ENCODE measurements at regions of chr22 and their contacts with region 1.

Region 1: DNA sequence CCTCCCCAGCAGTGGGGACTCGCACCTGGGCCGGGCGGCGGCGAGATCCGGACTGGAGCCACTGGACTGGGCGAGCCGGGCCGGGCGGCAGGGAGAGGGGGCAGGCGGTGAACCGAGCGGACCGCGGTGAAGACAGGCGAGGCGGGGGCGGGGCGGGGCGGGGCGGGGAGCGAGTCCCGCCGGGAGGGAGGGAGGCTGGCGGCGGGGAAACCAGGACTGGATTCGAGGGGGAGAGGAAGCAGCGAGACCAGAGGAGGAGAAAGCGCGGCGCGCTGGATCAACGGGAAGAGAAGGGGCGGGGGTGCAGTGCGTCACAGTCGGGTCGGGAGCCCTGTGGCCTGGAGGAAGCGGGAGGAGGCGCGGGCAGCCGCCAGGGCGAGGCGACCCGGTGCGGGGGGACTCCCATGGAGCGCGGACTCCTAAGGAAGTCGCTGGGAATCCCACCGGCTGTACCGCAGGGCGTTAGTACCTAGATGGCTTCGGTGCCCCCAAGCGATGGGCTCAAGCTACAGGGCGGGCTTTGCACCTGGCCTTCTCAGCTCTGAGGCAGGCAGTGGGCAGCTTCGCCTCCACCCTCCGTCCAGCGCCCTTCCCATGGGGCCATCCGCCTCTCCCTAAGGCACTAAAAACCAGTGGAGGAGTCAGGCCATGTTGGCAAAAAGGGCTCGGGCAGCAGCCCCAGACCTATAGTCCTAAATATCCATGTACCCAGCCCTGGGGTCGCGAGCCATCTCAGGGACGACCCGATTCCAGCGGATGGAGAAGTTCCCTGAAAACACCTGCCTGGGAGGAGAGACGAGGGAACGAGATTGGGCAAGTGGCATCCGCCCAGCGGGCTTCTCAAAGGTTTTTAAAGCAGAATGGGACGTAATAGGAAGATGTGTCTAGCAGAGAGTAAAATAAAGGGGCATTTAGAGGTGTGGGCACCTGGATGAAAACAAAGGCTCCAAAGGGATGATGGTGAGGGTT is at the start of gene TMEM121B:
- DNase-seq: no peak
- H3K4me3 ChIP-seq: no peak within 1 kb of the TSS
- H3K4me3 Mint-ChIP-seq: peak within 1 kb of the TSS; percentile 51 to 74 (median 62)
- H3K27ac ChIP-seq: no peak within 1 kb of the TSS
- H3K27ac Mint-ChIP-seq: peak within 1 kb of the TSS in 1 of 7 donors; percentile 23
- H3K4me1 ChIP-seq: peaks cover 44% of the 10 kb centered on the region
- H3K4me1 Mint-ChIP-seq: peaks cover 25 to 39% (median 31%) of the 10 kb centered on the region in 4 donors
- H3K27me3 ChIP-seq: peaks cover 14% of the 10 kb centered on the region
- H3K27me3 Mint-ChIP-seq: peaks cover 8 to 15% of the 10 kb centered on the region in 2 donors
- total RNA-seq, gene TMEM121B: 0.12 TPM in 1 of 2 experiments, not detected in the other

Region 2: DNA sequence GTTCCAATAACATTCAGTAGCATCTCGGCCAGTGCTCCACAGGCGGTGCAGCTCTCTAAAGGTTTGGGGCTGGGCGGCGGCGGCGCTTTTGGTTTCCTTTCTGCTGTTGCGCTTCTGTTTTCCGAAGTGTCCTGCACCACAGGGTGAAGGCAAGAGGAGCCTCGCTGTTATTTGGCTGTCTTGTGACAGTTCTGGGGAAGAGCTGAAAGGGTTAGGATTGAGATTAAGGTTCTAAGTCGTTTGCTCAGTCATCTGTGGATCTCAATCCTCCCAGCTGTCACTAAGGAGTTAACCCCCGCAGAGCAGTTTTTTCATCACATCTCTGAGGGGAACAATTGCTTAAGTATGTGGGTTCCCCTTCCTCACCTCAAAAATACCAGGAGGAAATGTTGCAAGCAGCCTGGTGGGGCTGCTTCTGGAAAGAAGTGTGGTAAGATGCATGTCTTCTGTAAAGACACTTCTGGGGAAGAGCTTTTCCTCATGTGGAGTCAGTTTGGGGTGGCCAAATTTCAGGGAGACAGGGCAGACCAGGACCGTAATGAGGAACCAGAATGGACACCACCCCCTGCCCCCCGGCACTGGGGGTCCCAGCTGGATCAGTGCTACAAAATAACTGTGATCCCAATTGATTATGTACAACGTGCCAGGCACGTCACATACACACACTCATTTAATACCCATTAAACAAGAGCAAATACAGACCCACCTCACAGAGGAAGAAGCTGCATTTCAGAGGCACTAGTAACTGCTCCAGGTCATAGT is 14.5 kb before region 1 on chr22:
- CTCF ChIA-PET with region 1: interaction called, 4 read pairs
- POLR2A ChIA-PET with region 1: interaction called, 17 read pairs
- intact Hi-C with region 1: no loop called
- DNase-seq: peak in 1 of 5 donors; percentile 17
- H3K4me3 ChIP-seq: no peak overlapping the region
- H3K4me3 Mint-ChIP-seq: peak overlapping the region; percentile 64 to 87 (median 72)
- H3K27ac ChIP-seq: no peak overlapping the region
- H3K27ac Mint-ChIP-seq: peak overlapping the region; percentile 73 to 85 (median 84)
- H3K4me1 ChIP-seq: peaks cover 28% of the 10 kb centered on the region
- H3K4me1 Mint-ChIP-seq: peaks cover 23 to 61% (median 43%) of the 10 kb centered on the region in 4 donors
- H3K27me3 ChIP-seq: no peaks in the 10 kb centered on the region
- H3K27me3 Mint-ChIP-seq: no peaks in the 10 kb centered on the region

Region 3: DNA sequence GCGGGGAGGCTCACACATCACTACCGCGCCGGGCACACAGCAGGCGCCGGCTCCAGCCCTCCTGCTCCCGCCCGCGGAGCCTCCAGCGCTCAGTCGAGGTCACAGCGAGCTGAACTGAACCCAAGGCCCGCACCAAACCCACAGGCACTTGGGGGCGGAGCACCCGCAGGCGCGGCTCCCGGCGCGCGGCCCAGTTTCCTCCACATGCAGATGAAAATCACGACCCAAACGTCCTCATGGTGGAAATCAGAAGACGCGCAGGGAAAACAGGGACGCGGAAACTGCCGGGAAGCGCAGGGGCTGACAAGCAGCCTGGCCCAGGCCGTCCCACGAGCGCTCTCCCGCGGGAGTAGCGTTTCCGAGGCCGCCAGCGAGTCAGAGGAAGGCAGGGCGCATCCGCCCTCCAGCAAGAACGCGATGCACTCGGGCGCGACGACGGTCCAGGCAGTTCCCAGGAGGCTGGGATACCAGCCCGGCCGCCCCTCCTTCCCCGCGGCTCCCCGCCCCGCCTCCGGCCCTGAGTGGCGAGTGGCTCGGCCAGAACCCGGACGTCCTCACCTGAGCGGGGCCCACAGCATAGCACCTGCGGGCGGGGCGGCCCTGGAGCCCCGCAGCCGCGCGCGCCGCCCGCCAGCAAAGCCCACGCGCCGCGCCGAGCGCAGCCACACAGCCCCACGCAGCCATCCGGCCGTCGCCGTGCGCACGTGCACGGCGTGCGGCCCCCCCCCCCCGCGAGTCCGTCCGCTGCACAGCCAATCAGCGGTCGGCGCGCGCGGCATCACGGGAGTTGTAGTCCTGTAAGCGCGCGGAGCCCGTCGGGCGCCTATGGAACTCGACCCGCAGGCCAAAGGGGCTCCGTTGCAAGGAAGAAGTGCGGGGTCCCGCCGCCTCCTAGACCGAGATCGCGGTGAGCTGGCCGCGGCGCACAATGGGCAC is 37.3 kb after region 1 on chr22 and contains the start of gene HDHD5:
- CTCF ChIA-PET with region 1: interaction called, 4 read pairs
- POLR2A ChIA-PET with region 1: no interaction called
- intact Hi-C with region 1: loop called (anchors 1 kb)
- DNase-seq: peak; percentile 81 to 87 (median 85)
- H3K4me3 ChIP-seq: peak within 1 kb of the TSS; percentile 52 to 81
- H3K4me3 Mint-ChIP-seq: peak within 1 kb of the TSS; percentile 84 to 90 (median 88)
- H3K27ac ChIP-seq: peak within 1 kb of the TSS; percentile 46
- H3K27ac Mint-ChIP-seq: peak within 1 kb of the TSS; percentile 77 to 88 (median 85)
- H3K4me1 ChIP-seq: peaks cover 36% of the 10 kb centered on the region
- H3K4me1 Mint-ChIP-seq: peaks cover 17 to 48% (median 24%) of the 10 kb centered on the region in 4 donors
- H3K27me3 ChIP-seq: no peaks in the 10 kb centered on the region
- H3K27me3 Mint-ChIP-seq: no peaks in the 10 kb centered on the region
- total RNA-seq, gene HDHD5: 23.1 to 23.3 TPM

Region 4: GRCh38 chr22:17734187-17734586 is 612.7 kb after region 1 on chr22:
- CTCF ChIA-PET with region 1: no interaction called
- POLR2A ChIA-PET with region 1: no interaction called
- intact Hi-C with region 1: no loop called
- DNase-seq: no peak
- H3K4me3 ChIP-seq: no peak overlapping the region
- H3K4me3 Mint-ChIP-seq: peak overlapping the region in 1 of 8 donors; percentile 7
- H3K27ac ChIP-seq: no peak overlapping the region
- H3K27ac Mint-ChIP-seq: peak overlapping the region; percentile 63 to 87 (median 77)
- H3K4me1 ChIP-seq: peaks cover 7% of the 10 kb centered on the region
- H3K4me1 Mint-ChIP-seq: peaks cover 10 to 19% (median 14%) of the 10 kb centered on the region in 4 donors
- H3K27me3 ChIP-seq: no peaks in the 10 kb centered on the region
- H3K27me3 Mint-ChIP-seq: no peaks in the 10 kb centered on the region

Measured in CD4-positive, alpha-beta memory T cell (primary cell).